ENCODE measurements at regions of chr4 and their contacts with region 1.

Region 1: GRCh38 chr4:81040012-81040659 is 9.6 kb downstream of the BMP3 start:
- DNase-seq: peak in 2 of 9 experiments; percentile 49 to 59
- ATAC-seq: no peak
- H3K4me3 ChIP-seq: no peak overlapping the region
- H3K4me3 Mint-ChIP-seq: no peak overlapping the region
- H3K27ac ChIP-seq: no peak overlapping the region
- H3K27ac Mint-ChIP-seq: no peak overlapping the region
- H3K4me1 ChIP-seq: no peaks in the 10 kb centered on the region
- H3K4me1 Mint-ChIP-seq: peaks cover 2% of the 10 kb centered on the region
- H3K27me3 ChIP-seq: no peaks in the 10 kb centered on the region
- H3K27me3 Mint-ChIP-seq: peaks cover 22% of the 10 kb centered on the region
- CTCF ChIP-seq: peak; percentile 71

Region 2: GRCh38 chr4:80221161-80221560 is 819.0 kb before region 1 on chr4:
- CTCF ChIA-PET with region 1: interaction called, 3 read pairs
- POLR2A ChIA-PET with region 1: no interaction called
- intact Hi-C with region 1: loop called (anchors 10 kb)
- DNase-seq: no peak
- ATAC-seq: no peak
- H3K4me3 ChIP-seq: no peak overlapping the region
- H3K4me3 Mint-ChIP-seq: no peak overlapping the region
- H3K27ac ChIP-seq: no peak overlapping the region
- H3K27ac Mint-ChIP-seq: no peak overlapping the region
- H3K4me1 ChIP-seq: no peaks in the 10 kb centered on the region
- H3K4me1 Mint-ChIP-seq: no peaks in the 10 kb centered on the region
- H3K27me3 ChIP-seq: no peaks in the 10 kb centered on the region
- H3K27me3 Mint-ChIP-seq: peaks cover 22% of the 10 kb centered on the region
- CTCF ChIP-seq: no peak

Region 3: DNA sequence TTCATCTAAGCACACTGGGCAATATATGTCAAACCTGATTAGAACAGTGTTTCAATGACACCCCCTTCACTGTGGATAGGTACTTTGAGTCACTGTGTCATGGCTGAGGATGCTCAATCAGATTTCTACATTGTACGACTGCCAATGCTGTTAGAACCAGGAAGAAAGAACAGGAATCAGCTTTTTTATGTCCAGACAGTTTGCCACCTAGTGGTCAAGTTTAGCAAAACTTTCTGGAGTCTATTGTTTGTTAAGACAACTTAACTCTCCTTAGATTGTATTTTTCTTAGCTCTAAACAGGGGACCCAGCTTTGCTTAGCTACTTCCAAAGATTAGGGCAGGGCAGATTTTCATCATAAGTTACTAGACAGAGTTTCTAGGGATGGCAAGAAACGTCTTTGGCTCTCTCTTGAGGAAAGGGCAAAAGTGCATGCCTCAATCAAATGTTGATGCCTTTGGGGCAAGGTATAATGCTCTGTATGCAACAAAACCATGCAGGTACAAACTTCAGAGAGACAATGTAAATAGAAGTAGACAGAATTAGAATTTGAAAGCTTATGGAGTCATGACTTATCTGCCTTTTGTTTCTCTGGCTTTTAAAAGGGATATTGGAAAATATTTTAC is 50.1 kb before region 1 on chr4:
- CTCF ChIA-PET with region 1: interaction called, 19 read pairs
- POLR2A ChIA-PET with region 1: no interaction called
- intact Hi-C with region 1: loop called (anchors 1 to 5 kb)
- DNase-seq: peak in 4 of 9 experiments; percentile 12 to 68 (median 38)
- ATAC-seq: peak; percentile 42
- H3K4me3 ChIP-seq: no peak overlapping the region
- H3K4me3 Mint-ChIP-seq: no peak overlapping the region
- H3K27ac ChIP-seq: no peak overlapping the region
- H3K27ac Mint-ChIP-seq: no peak overlapping the region
- H3K4me1 ChIP-seq: no peaks in the 10 kb centered on the region
- H3K4me1 Mint-ChIP-seq: peaks cover 4% of the 10 kb centered on the region
- H3K27me3 ChIP-seq: no peaks in the 10 kb centered on the region
- H3K27me3 Mint-ChIP-seq: peaks cover 4% of the 10 kb centered on the region
- CTCF ChIP-seq: peak; percentile 83

Region 4: DNA sequence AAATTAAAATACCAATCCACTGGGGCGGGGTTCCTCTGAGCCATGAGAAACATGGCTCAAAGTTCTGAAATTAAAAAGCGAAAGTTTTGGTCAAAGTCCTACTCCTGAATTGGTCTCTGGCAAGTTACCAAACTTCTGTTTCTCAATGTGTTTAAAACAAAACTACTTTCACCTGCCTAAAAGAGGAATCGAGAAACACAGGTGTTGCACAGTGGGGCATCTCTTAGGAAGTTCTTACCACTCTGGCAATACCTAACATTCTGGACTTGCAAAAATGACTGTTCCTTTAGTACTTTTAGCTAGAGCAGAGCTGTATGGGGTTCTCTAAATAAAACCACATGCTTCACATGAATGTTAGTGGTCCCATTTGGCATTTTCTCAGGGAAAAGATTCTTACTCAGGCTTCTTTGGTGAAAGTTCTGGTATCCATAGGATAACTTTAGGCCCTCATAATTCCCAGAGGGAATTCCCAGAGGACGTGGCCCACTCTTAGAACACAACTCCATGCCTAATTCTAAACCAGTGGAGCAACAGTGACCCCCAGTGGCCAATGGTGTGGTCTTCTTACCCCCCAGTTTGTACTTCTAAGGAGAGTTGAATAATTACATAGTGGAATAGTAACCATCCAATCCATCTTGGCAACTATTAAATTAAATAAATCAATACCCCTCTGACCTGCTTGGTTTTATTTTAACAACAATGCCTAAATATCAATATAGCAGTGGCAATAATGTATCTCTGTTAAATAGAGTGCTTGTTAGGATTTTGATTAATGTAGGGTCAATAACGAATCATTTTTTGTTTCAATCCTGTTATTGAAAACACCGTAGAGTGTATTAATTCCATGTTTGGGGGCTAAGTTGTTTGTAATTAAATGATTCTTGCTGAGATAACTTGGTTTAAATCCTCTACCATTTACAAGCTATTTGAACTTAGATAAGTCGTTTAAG is 12.3 kb after region 1 on chr4:
- CTCF ChIA-PET with region 1: interaction called, 13 read pairs
- POLR2A ChIA-PET with region 1: interaction called, 3 read pairs
- intact Hi-C with region 1: no loop called
- DNase-seq: peak; percentile 14 to 73 (median 48)
- ATAC-seq: peak; percentile 42
- H3K4me3 ChIP-seq: no peak overlapping the region
- H3K4me3 Mint-ChIP-seq: no peak overlapping the region
- H3K27ac ChIP-seq: no peak overlapping the region
- H3K27ac Mint-ChIP-seq: no peak overlapping the region
- H3K4me1 ChIP-seq: no peaks in the 10 kb centered on the region
- H3K4me1 Mint-ChIP-seq: no peaks in the 10 kb centered on the region
- H3K27me3 ChIP-seq: no peaks in the 10 kb centered on the region
- H3K27me3 Mint-ChIP-seq: peaks cover 2% of the 10 kb centered on the region
- CTCF ChIP-seq: peak; percentile 45

Region 5: DNA sequence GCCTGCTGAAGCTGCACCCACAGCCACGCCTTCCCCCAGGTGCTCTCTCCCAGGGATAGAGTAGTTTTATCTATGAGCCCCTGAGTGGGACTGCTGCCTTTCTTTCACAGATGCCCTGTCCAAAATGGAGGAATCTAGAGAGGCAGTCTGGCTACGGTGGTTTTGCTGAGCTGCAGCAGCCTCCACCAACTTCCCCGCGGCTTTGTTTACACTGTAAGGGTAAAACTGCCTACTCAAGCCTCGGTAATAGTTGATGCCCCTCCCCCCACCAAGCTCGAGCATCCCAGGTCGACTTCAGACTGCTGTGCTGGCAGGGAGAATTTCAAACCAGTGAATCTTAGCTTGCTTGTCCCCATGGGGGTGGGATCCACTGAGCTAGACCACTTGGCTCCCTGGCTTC is 90.4 kb after region 1 on chr4:
- CTCF ChIA-PET with region 1: no interaction called
- POLR2A ChIA-PET with region 1: no interaction called
- intact Hi-C with region 1: no loop called
- DNase-seq: no peak
- ATAC-seq: no peak
- H3K4me3 ChIP-seq: no peak overlapping the region
- H3K4me3 Mint-ChIP-seq: no peak overlapping the region
- H3K27ac ChIP-seq: no peak overlapping the region
- H3K27ac Mint-ChIP-seq: no peak overlapping the region
- H3K4me1 ChIP-seq: no peaks in the 10 kb centered on the region
- H3K4me1 Mint-ChIP-seq: no peaks in the 10 kb centered on the region
- H3K27me3 ChIP-seq: no peaks in the 10 kb centered on the region
- H3K27me3 Mint-ChIP-seq: peaks cover 2% of the 10 kb centered on the region
- CTCF ChIP-seq: no peak

Measured in CD8-positive, alpha-beta T cell (primary cell).